MCF 10A (cell line): ENCODE measurements at regions of chr4 and their contacts with region 1.

Region 1: GRCh38 chr4:2468445-2469192 is at the start of gene RNF4:
- DNase-seq: peak; percentile 97
- H3K4me3 Mint-ChIP-seq: peak within 1 kb of the TSS; percentile 93
- H3K27ac Mint-ChIP-seq: peak within 1 kb of the TSS; percentile 94
- H3K4me1 Mint-ChIP-seq: peaks cover 14% of the 10 kb centered on the region
- H3K27me3 Mint-ChIP-seq: no peaks in the 10 kb centered on the region
- CTCF ChIP-seq: no peak
- total RNA-seq, gene RNF4: 81.4 and 89.7 TPM in 2 replicates

Region 2: DNA sequence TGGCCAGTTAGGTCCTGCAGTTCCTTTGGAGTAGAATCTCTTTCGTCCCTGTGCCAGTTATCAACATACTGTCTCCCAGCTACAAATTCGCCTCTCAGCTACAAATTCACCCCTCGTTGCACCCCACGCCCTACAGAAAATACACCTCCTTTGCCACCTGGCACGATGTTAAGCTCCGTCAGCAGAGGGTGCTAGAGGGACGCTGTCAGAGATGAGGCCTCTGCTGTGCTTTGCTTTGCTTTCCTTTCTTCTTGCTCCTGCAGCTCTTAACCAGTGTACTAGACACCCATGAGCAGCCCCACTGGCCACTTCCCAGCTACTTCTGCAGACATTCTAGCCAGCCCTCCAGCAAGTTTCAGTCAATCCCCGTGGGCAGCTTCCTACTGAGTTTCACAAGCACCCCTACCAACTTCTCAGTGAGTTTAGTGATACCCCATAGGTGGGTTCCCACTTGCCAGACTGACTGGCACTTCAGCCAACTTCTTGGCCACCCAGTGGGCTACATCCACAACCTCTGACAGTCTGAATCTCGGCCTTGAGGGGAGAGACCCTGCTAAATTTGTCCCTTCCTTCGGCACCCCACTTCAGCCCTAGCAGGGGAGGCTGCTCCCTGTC is 248.5 kb before region 1 on chr4:
- CTCF ChIA-PET with region 1: interaction called, 22 read pairs
- POLR2A ChIA-PET with region 1: interaction called, 8 read pairs
- intact Hi-C with region 1: no loop called
- DNase-seq: peak; percentile 78
- H3K4me3 Mint-ChIP-seq: no peak overlapping the region
- H3K27ac Mint-ChIP-seq: peak overlapping the region; percentile 21
- H3K4me1 Mint-ChIP-seq: peaks cover 8% of the 10 kb centered on the region
- H3K27me3 Mint-ChIP-seq: no peaks in the 10 kb centered on the region
- CTCF ChIP-seq: peak; percentile 90

Region 3: DNA sequence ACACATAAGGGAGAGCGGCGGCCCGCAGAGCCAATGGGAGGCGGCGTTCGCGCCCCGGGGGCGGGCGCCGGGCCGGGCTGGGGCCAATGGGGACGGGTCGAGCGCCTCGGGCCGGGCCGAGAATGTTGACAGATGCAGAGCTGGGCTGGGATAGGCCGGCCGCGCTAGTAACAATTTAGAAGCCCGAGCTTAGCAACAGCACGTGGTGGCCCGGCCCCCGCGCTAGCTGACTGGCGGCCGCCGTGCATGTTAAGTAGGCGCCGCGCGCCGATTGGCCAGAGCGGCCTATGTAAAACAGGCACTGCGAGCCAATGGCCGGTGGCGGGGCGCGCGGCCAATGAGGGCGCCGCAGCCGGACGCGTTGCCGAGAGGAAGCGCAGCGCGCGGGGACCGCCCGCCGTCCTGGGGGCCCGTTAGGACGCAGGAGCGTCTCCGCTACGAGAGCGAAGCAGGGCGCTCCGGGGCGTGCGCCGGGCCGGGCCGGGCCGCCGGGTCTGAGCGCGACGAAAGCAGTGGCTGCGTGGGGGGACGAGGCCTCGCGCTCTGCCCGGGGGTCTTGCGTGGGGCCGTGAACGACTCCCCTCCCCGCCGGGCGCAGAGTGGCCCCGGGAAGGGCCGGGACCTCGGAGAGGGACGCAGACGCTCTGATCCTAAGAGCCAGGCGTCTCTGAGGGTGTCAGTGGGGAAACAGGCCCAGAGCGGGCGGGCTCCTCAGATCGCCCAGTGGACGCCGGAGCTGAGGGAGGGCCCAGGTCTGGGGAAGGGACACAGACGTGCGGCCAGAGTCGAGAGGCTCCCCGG is 206.3 kb before region 1 on chr4:
- CTCF ChIA-PET with region 1: interaction called, 3 read pairs
- POLR2A ChIA-PET with region 1: interaction called, 35 read pairs
- intact Hi-C with region 1: no loop called
- DNase-seq: peak; percentile 99
- H3K4me3 Mint-ChIP-seq: peak overlapping the region; percentile 73
- H3K27ac Mint-ChIP-seq: peak overlapping the region; percentile 77
- H3K4me1 Mint-ChIP-seq: peaks cover 8% of the 10 kb centered on the region
- H3K27me3 Mint-ChIP-seq: no peaks in the 10 kb centered on the region
- CTCF ChIP-seq: no peak

Region 4: DNA sequence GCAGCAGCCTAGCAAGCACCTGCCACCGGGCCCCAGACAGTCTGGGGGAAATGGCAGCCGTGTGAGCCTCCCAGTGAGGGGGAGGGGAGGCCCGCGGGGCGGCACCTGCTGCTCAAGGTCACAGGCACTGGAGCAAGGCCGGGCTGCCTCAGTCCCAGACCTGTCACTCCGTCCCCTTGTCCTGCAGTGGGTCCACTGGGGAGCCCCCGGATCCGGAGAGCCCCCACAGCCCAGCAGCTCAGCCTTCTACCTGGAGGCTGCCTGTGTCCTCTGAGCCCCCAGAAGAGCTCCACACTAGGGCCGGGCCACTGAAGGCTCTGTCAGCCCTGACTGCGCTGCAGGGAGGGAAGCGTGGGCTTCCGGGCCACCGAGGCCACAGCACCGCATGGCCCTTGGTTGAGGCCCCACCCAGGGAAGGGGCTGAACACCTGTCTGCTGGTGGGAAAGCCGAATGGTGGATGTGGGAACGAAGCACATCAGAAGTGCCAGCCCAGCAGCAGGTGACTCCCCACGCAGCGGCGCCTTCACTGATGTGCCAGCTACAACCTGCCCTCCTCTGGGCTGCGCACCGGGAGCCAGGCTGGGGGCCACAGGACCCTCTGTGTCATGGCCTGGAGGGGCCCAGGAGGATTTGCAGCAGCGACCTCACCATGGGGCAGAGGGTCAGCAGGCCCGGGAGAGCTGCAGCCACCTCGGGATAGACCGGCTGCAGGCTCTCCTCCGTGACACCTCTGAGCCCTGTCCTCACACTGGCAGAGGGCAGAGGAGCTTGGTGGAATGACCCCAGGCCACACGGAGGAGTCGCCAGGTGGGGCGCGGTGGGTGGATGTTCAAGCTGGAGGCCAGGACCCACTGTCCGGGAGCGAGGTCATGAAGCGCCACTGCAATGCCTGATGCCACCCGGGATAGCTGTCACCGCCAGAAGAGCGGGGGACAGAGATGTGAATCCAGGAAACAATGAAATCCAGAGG is 171.7 kb before region 1 on chr4:
- CTCF ChIA-PET with region 1: no interaction called
- POLR2A ChIA-PET with region 1: no interaction called
- intact Hi-C with region 1: no loop called
- DNase-seq: no peak
- H3K4me3 Mint-ChIP-seq: no peak overlapping the region
- H3K27ac Mint-ChIP-seq: no peak overlapping the region
- H3K4me1 Mint-ChIP-seq: no peaks in the 10 kb centered on the region
- H3K27me3 Mint-ChIP-seq: peaks cover 18% of the 10 kb centered on the region
- CTCF ChIP-seq: no peak

Region 5: GRCh38 chr4:2418650-2419571 is 49.7 kb before region 1 on chr4 and contains the start of gene CFAP99:
- CTCF ChIA-PET with region 1: interaction called, 3 read pairs
- POLR2A ChIA-PET with region 1: interaction called, 14 read pairs
- intact Hi-C with region 1: no loop called
- DNase-seq: peak; percentile 93
- H3K4me3 Mint-ChIP-seq: peak within 1 kb of the TSS; percentile 80
- H3K27ac Mint-ChIP-seq: peak within 1 kb of the TSS; percentile 74
- H3K4me1 Mint-ChIP-seq: peaks cover 15% of the 10 kb centered on the region
- H3K27me3 Mint-ChIP-seq: peaks cover 41% of the 10 kb centered on the region
- CTCF ChIP-seq: no peak
- total RNA-seq, gene CFAP99: 0.16 TPM in 1 of 2 replicates, not detected in the other

Region 6: DNA sequence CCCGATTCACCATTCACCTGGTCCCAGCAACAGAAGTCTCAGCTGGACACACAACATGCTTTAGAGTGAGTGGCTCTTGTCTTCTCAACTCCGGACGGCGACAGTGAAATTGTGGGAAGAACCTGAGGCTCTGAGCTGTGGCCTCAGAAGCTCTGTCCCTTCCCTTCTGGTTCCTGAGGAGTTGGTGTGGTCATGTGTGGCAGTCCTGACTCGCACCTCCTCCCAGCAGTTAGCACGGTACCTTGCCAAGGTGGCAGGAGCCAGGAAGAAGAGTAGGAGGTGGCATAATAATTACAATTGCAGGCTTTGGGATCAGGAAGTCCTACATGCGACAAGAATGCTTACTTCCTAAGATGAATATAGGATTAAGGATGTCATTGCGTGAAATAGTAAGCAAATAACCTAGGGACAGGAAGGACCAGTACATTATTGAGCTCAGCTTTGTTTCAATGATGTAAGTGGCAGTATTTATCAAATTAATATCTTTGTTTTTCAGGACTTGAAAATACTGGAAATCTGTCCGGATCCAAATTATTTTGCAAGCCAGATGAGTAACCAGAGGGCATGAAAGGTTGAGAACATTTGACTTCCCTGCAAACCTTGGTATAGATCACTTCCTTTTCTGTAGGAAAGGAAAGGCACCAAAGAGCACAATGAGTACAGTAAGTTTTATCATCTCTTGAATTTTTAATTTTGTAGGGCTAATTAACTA is 21.4 kb after region 1 on chr4:
- CTCF ChIA-PET with region 1: interaction called, 4 read pairs
- POLR2A ChIA-PET with region 1: interaction called, 12 read pairs
- intact Hi-C with region 1: no loop called
- DNase-seq: peak; percentile 22
- H3K4me3 Mint-ChIP-seq: peak overlapping the region; percentile 25
- H3K27ac Mint-ChIP-seq: peak overlapping the region; percentile 91
- H3K4me1 Mint-ChIP-seq: peaks cover 32% of the 10 kb centered on the region
- H3K27me3 Mint-ChIP-seq: no peaks in the 10 kb centered on the region
- CTCF ChIP-seq: no peak